Right cardiac atrium (tissue), 5 donors: ENCODE measurements at regions of chr1 and their contacts with region 1.

Region 1: DNA sequence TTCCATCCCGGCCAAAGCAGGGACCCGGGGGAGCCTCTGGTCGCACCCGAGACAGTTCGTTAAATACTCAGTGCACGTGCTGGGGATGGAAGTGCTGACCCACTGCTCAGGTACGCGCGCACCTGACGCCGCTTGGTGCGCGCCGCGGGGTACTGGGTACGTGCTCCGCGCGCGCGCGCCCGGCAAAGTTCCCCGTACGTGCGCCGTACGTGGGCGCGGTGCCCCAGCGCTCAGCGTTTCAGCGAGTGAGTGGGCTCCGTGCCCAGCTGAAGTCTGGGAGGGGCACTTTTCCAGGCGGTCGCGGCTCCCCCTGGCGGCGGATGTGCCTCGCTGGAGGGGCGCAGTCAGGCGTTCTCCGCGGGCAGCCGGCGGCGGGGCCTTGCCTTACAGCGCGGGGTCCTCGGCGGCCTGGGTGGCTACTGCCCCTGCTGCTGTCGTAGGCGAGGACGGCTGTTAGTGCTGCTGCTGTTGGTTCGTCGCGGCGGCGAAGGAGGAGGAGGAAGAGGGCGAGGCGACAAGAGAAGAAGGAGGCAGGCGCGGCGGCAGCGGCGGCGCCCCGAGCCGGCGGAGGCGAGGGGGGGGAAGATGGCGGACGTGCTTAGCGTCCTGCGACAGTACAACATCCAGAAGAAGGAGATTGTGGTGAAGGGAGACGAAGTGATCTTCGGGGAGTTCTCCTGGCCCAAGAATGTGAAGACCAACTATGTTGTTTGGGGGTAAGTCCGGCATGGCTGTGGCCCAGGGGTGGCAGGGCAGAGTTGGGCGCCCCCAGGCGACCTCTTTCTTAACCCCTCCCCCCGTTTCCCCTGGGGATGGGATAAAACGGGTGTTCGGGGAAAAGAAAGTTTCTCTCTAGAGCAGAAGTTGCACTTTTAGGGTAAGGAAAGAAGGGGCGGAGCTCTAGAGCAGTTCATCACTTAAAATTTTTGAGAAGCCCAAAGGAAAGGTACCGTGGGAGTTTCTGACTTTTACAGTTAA is at the start of gene CDC73:
- DNase-seq: peak; percentile 98 to 100 (median 99)
- ATAC-seq: peak; percentile 99
- H3K4me3 ChIP-seq: peak within 1 kb of the TSS; percentile 69
- H3K27ac ChIP-seq: peak within 1 kb of the TSS; percentile 88
- H3K4me1 ChIP-seq: peaks cover 2% of the 10 kb centered on the region
- H3K27me3 ChIP-seq: no peaks in the 10 kb centered on the region
- total RNA-seq, gene CDC73: 53.5 to 60.9 (median 55.4) TPM

Region 2: DNA sequence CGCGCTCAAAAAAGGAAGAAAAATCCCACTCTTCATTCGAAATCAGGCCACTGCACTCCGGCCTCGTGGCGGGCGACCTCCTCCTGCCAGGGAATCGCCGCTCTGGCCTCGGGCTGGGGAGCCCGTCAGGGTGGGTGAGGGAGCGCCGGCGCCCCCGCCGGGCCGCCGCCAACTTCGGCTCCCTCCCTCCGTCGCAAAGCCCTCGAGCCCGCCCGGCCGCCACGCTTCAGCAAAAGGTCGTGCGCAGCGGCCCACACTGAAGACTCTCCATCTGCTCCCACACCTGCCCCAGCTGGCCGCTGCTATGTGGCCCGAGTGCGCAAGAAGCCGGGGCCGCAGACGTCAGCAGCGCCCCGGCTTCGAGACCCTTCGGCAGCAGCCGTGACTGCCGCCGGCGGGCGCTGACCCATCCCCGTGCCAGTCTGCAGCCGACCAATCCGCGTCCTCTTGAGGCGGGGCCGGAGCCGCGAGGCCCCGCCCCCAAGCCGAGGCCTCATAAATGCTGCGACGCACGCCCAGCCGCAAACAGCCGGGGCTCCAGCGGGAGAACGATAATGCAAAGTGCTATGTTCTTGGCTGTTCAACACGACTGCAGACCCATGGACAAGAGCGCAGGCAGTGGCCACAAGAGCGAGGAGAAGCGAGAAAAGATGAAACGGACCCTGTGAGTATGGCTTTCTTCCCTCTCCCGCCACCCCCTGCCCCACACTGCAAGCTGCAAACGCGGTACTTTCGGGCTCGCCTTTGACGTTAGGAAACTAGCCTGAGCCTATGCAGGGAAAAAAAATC is 313.2 kb before region 1 on chr1 and contains the start of gene RGS2:
- intact Hi-C with region 1: loop called in 1 of 4 experiments (anchors 5 kb)
- DNase-seq: peak; percentile 93 to 97 (median 97)
- ATAC-seq: peak; percentile 99
- H3K4me3 ChIP-seq: peak within 1 kb of the TSS; percentile 87
- H3K27ac ChIP-seq: peak within 1 kb of the TSS; percentile 93
- H3K4me1 ChIP-seq: no peaks in the 10 kb centered on the region
- H3K27me3 ChIP-seq: no peaks in the 10 kb centered on the region
- total RNA-seq, gene RGS2: 24.0 to 106 (median 38.0) TPM

Region 3: GRCh38 chr1:193104906-193105820 is 16.7 kb before region 1 on chr1 and contains the start of gene GLRX2:
- intact Hi-C with region 1: loop called in 1 of 4 experiments (anchors 2 kb)
- DNase-seq: peak; percentile 88 to 95 (median 94)
- ATAC-seq: peak; percentile 99
- H3K4me3 ChIP-seq: peak within 1 kb of the TSS; percentile 69
- H3K27ac ChIP-seq: peak within 1 kb of the TSS; percentile 96
- H3K4me1 ChIP-seq: no peaks in the 10 kb centered on the region
- H3K27me3 ChIP-seq: no peaks in the 10 kb centered on the region
- total RNA-seq, gene GLRX2: 25.3 to 32.7 (median 30.2) TPM